Mammary epithelial cell (primary cell): ENCODE measurements at regions of chr6 and their contacts with region 1.

Region 1: GRCh38 chr6:118776607-118777549 is 117.1 kb upstream of the ASF1A start:
- DNase-seq: peak; percentile 88
- H3K4me3 ChIP-seq: peak overlapping the region in 2 of 3 experiments; percentile 10 to 23
- H3K27ac ChIP-seq: no peak overlapping the region
- H3K4me1 ChIP-seq: peaks cover 27% of the 10 kb centered on the region
- H3K27me3 ChIP-seq: no peaks in the 10 kb centered on the region
- CTCF ChIP-seq: peak; percentile 82 to 83

Region 2: GRCh38 chr6:118197539-118197938 is 579.3 kb before region 1 on chr6:
- CTCF ChIA-PET with region 1: no interaction called
- dilution Hi-C with region 1: no loop called
- in situ Hi-C with region 1: no loop called
- intact Hi-C with region 1: no loop called
- DNase-seq: no peak
- H3K4me3 ChIP-seq: no peak overlapping the region
- H3K27ac ChIP-seq: no peak overlapping the region
- H3K4me1 ChIP-seq: no peaks in the 10 kb centered on the region
- H3K27me3 ChIP-seq: no peaks in the 10 kb centered on the region
- CTCF ChIP-seq: no peak

Region 3: GRCh38 chr6:118580585-118581419 is 196.1 kb before region 1 on chr6:
- CTCF ChIA-PET with region 1: interaction called, 6 read pairs
- dilution Hi-C with region 1: no loop called
- in situ Hi-C with region 1: no loop called
- intact Hi-C with region 1: loop called (anchors 5 kb)
- DNase-seq: peak; percentile 66
- H3K4me3 ChIP-seq: no peak overlapping the region
- H3K27ac ChIP-seq: no peak overlapping the region
- H3K4me1 ChIP-seq: peaks cover 6% of the 10 kb centered on the region
- H3K27me3 ChIP-seq: no peaks in the 10 kb centered on the region
- CTCF ChIP-seq: peak; percentile 45 to 71

Region 4: DNA sequence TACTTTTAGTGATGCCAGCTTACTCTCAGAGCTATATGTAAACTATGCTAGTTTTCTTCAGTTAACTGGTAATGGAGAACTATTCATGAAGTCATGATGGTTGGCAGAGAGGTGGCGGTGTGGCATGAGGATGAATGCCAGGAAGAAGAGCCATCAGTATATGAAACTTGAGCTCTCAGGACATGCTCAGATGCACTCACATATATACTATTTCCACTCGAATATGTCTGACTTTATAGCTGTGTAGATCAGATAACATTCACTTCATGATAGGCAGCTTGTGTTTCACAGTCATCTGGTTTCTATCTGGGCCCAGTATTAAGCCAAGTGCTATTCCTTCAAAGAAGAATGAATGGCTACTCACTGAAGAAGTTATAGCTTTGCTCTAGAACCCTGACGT is 79.3 kb before region 1 on chr6:
- CTCF ChIA-PET with region 1: interaction called, 5 read pairs
- dilution Hi-C with region 1: no loop called
- in situ Hi-C with region 1: no loop called
- intact Hi-C with region 1: loop called (anchors 2 kb)
- DNase-seq: no peak
- H3K4me3 ChIP-seq: no peak overlapping the region
- H3K27ac ChIP-seq: no peak overlapping the region
- H3K4me1 ChIP-seq: no peaks in the 10 kb centered on the region
- H3K27me3 ChIP-seq: no peaks in the 10 kb centered on the region
- CTCF ChIP-seq: peak in 1 of 2 donors; percentile 9